ENCODE measurements at regions of chr17 and their contacts with region 1.

Region 1: GRCh38 chr17:1684378-1685189 is at the start of gene PRPF8:
- DNase-seq: peak; percentile 98
- H3K4me3 ChIP-seq: peak within 1 kb of the TSS; percentile 87 to 91 (median 90)
- H3K27ac ChIP-seq: peak within 1 kb of the TSS; percentile 95 to 96
- H3K4me1 ChIP-seq: peaks cover 0 to 5% of the 10 kb centered on the region in 2 donors
- H3K27me3 ChIP-seq: no peaks in the 10 kb centered on the region
- CTCF ChIP-seq: peak in 1 of 3 donors; percentile 16
- POLR2A ChIP-seq: peak; percentile 98
- total RNA-seq, gene PRPF8: 173 to 183 (median 176) TPM

Region 2: DNA sequence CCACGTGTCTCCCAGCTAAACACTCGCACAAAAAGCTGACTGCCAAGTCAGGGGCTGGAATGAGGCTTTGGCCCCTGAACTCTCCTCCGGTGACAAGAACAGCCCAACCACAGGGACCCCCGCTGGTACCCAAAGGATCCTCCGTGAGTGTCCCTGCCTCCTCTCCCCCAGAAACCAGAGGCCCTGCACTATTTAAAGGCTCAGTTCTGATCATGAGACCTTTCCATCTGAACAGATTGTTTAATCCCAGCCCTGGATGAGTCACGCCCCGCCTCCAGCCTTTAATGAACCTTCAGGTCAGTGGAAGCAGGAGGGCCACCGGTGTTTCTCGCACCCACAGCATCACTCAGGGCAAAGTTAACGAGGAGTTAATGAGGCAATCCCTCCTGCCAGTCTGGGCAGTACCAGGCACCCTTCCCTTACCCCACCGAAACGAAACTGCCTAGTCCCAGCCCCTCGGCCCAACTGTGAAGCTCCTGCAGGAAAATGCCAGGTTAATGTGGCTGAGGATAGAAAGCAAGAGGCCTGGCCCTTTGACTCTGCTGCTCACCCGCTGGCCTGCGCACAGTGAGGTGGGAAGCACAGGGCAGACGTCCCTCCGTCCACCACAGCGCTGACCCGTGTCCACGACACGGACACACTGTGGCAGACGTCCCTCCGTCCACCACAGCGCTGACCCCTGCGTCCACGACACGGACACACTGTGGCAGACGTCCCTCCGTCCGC is 655.2 kb before region 1 on chr17:
- intact Hi-C with region 1: loop called (anchors 10 kb)
- DNase-seq: no peak
- H3K4me3 ChIP-seq: peak overlapping the region in 1 of 3 donors; percentile 5
- H3K27ac ChIP-seq: peak overlapping the region; percentile 38 to 85
- H3K4me1 ChIP-seq: peaks cover 0 to 7% of the 10 kb centered on the region in 2 donors
- H3K27me3 ChIP-seq: no peaks in the 10 kb centered on the region
- CTCF ChIP-seq: no peak
- POLR2A ChIP-seq: no peak

Region 3: GRCh38 chr17:1703063-1703462 is 18.5 kb after region 1 on chr17:
- intact Hi-C with region 1: no loop called
- DNase-seq: no peak
- H3K4me3 ChIP-seq: no peak overlapping the region
- H3K27ac ChIP-seq: no peak overlapping the region
- H3K4me1 ChIP-seq: no peaks in the 10 kb centered on the region
- H3K27me3 ChIP-seq: no peaks in the 10 kb centered on the region
- CTCF ChIP-seq: no peak
- POLR2A ChIP-seq: no peak